Dorsolateral prefrontal cortex (tissue), 120 donors: ENCODE measurements at regions of chr3 and their contacts with region 1.

Region 1: DNA sequence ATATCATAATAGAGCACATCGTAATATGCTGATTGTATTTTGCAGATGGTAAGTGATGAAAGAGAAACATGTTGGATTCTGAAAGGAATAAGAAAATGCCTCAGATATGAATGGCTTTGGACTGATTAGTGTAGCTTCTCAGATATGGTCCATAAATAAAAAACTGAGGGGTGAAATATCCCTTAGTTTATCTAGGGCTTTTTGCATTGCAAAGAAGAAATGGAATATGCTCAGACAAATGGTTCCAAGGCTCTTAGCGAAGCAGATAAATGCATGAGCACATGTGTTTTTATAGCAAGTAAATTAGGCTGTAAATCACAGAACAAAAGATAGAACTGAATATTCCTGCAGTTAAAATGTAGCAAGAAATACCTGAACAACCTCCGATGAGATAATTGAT is 820.9 kb upstream of the GRM7 start:
- DNase-seq: no peak
- H3K4me3 ChIP-seq: no peak overlapping the region
- H3K27ac ChIP-seq: no peak overlapping the region
- H3K27me3 ChIP-seq: peaks cover 0 to 14% (median 0%) of the 10 kb centered on the region in 45 donors
- CTCF ChIP-seq: no peak

Region 2: DNA sequence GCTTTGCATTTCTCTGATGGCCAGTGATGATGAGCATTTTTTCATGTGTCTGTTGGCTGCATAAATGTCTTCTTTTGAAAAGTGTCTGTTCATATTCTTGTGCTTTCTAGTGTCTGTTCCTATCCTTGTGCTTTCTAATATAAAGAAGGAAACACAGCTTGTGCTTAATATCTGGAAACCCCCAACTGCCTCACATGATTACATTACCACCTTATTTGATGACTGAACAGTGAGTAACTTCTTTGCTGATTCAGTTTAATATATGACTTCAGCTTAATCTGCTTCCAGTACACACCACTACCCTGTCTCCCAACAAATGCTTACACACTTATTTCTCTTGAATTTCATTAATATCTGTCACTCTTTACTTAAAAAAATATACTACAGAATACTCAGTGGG is 17.4 kb before region 1 on chr3:
- intact Hi-C with region 1: loop called in 1 of 2 experiments (anchors 1 kb)
- DNase-seq: no peak
- H3K4me3 ChIP-seq: no peak overlapping the region
- H3K27ac ChIP-seq: no peak overlapping the region
- H3K27me3 ChIP-seq: no peaks in the 10 kb centered on the region
- CTCF ChIP-seq: no peak